HEK293T (cell line): ENCODE measurements at regions of chr16 and their contacts with region 1.

Region 1: GRCh38 chr16:56317998-56318826 is 107.1 kb downstream of the AMFR start:
- DNase-seq: peak; percentile 93

Region 2: GRCh38 chr16:55944377-55944802 is 373.8 kb before region 1 on chr16:
- CTCF ChIA-PET with region 1: interaction called, 18 read pairs
- POLR2A ChIA-PET with region 1: no interaction called
- DNase-seq: peak; percentile 68